Naive thymus-derived CD4-positive, alpha-beta T cell (primary cell): ENCODE measurements at regions of chr6 and their contacts with region 1.

Region 1: GRCh38 chr6:111259089-111259831 is 172.0 kb downstream of the SLC16A10 start:
- DNase-seq: peak; percentile 98 to 99 (median 99)
- ATAC-seq: peak; percentile 99
- H3K4me3 ChIP-seq: peak overlapping the region; percentile 89
- H3K4me3 Mint-ChIP-seq: peak overlapping the region; percentile 75 to 90 (median 86)
- H3K27ac ChIP-seq: peak overlapping the region; percentile 87
- H3K27ac Mint-ChIP-seq: peak overlapping the region; percentile 83 to 97 (median 92)
- H3K4me1 ChIP-seq: peaks cover 6 to 17% of the 10 kb centered on the region in 2 donors
- H3K4me1 Mint-ChIP-seq: peaks cover 12 to 37% (median 30%) of the 10 kb centered on the region in 7 donors
- H3K27me3 ChIP-seq: no peaks in the 10 kb centered on the region
- H3K27me3 Mint-ChIP-seq: peaks cover 0 to 18% (median 0%) of the 10 kb centered on the region in 5 donors

Region 2: DNA sequence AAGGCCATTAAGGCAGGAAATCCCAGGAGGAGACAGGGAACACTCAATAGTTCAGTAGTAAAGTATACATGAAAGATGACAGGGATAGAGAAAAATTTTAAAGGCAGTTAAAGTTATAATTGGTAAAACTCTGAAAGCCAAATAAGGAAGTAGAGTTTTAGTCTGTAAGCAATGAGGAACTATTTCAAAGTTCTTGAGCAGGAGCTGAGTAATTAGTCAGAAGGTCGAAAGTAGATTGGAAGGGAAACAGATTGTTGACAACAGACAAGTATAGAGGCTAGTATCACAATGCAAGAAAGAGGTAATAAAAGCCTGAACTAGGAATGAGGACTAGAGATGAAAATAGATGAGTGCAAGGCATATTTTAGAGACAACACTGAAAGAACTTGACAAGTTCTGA is 594.3 kb before region 1 on chr6:
- CTCF ChIA-PET with region 1: no interaction called
- POLR2A ChIA-PET with region 1: no interaction called
- intact Hi-C with region 1: no loop called
- DNase-seq: no peak
- ATAC-seq: peak; percentile 77
- H3K4me3 ChIP-seq: no peak overlapping the region
- H3K4me3 Mint-ChIP-seq: no peak overlapping the region
- H3K27ac ChIP-seq: no peak overlapping the region
- H3K27ac Mint-ChIP-seq: no peak overlapping the region
- H3K4me1 ChIP-seq: no peaks in the 10 kb centered on the region
- H3K4me1 Mint-ChIP-seq: peaks cover 0 to 8% (median 0%) of the 10 kb centered on the region in 7 donors
- H3K27me3 ChIP-seq: no peaks in the 10 kb centered on the region
- H3K27me3 Mint-ChIP-seq: no peaks in the 10 kb centered on the region

Region 3: GRCh38 chr6:110873981-110874879 is 385.0 kb before region 1 on chr6 and contains the start of gene AMD1:
- CTCF ChIA-PET with region 1: no interaction called
- POLR2A ChIA-PET with region 1: interaction called, 5 read pairs
- intact Hi-C with region 1: loop called (anchors 2 to 10 kb)
- DNase-seq: peak; percentile 87 to 97 (median 96)
- ATAC-seq: peak; percentile 85
- H3K4me3 ChIP-seq: peak within 1 kb of the TSS; percentile 99
- H3K4me3 Mint-ChIP-seq: peak within 1 kb of the TSS in 9 of 10 donors; percentile 94 to 99 (median 99)
- H3K27ac ChIP-seq: peak within 1 kb of the TSS; percentile 73
- H3K27ac Mint-ChIP-seq: peak within 1 kb of the TSS in 8 of 9 donors; percentile 96 to 100 (median 99)
- H3K4me1 ChIP-seq: peaks cover 26 to 28% of the 10 kb centered on the region in 2 donors
- H3K4me1 Mint-ChIP-seq: peaks cover 19 to 28% (median 27%) of the 10 kb centered on the region in 7 donors
- H3K27me3 ChIP-seq: no peaks in the 10 kb centered on the region
- H3K27me3 Mint-ChIP-seq: no peaks in the 10 kb centered on the region
- total RNA-seq, gene AMD1: 61.1 to 105 (median 73.8) TPM

Region 4: GRCh38 chr6:111087106-111087835 is 172.0 kb before region 1 on chr6 and contains the start of gene SLC16A10:
- CTCF ChIA-PET with region 1: no interaction called
- POLR2A ChIA-PET with region 1: no interaction called
- intact Hi-C with region 1: loop called (anchors 1 to 5 kb)
- DNase-seq: peak; percentile 75 to 92 (median 90)
- ATAC-seq: peak; percentile 95
- H3K4me3 ChIP-seq: peak within 1 kb of the TSS; percentile 83
- H3K4me3 Mint-ChIP-seq: peak within 1 kb of the TSS; percentile 85 to 100 (median 97)
- H3K27ac ChIP-seq: peak within 1 kb of the TSS; percentile 80
- H3K27ac Mint-ChIP-seq: peak within 1 kb of the TSS; percentile 54 to 99 (median 96)
- H3K4me1 ChIP-seq: peaks cover 10 to 17% of the 10 kb centered on the region in 2 donors
- H3K4me1 Mint-ChIP-seq: peaks cover 20 to 54% (median 48%) of the 10 kb centered on the region in 7 donors
- H3K27me3 ChIP-seq: no peaks in the 10 kb centered on the region
- H3K27me3 Mint-ChIP-seq: peaks cover 0 to 24% (median 0%) of the 10 kb centered on the region in 5 donors
- total RNA-seq, gene SLC16A10: 1.6 to 27.7 (median 16.7) TPM

Region 5: GRCh38 chr6:111565326-111566221 is 306.3 kb after region 1 on chr6:
- CTCF ChIA-PET with region 1: no interaction called
- POLR2A ChIA-PET with region 1: no interaction called
- intact Hi-C with region 1: loop called (anchors 1 to 2 kb)
- DNase-seq: peak in 2 of 9 donors; percentile 16 to 21
- ATAC-seq: peak; percentile 60
- H3K4me3 ChIP-seq: no peak overlapping the region
- H3K4me3 Mint-ChIP-seq: peak overlapping the region in 3 of 10 donors; percentile 3 to 15 (median 3)
- H3K27ac ChIP-seq: no peak overlapping the region
- H3K27ac Mint-ChIP-seq: peak overlapping the region; percentile 44 to 95 (median 85)
- H3K4me1 ChIP-seq: peaks cover 0 to 19% of the 10 kb centered on the region in 2 donors
- H3K4me1 Mint-ChIP-seq: peaks cover 19 to 61% (median 50%) of the 10 kb centered on the region in 7 donors
- H3K27me3 ChIP-seq: no peaks in the 10 kb centered on the region
- H3K27me3 Mint-ChIP-seq: no peaks in the 10 kb centered on the region

Region 6: GRCh38 chr6:111692327-111693164 is 433.3 kb after region 1 on chr6:
- CTCF ChIA-PET with region 1: interaction called, 3 read pairs
- POLR2A ChIA-PET with region 1: no interaction called
- intact Hi-C with region 1: loop called (anchors 10 kb)
- DNase-seq: peak in 1 of 9 donors; percentile 12
- ATAC-seq: peak; percentile 31
- H3K4me3 ChIP-seq: no peak overlapping the region
- H3K4me3 Mint-ChIP-seq: peak overlapping the region in 8 of 10 donors; percentile 21 to 60 (median 45)
- H3K27ac ChIP-seq: peak overlapping the region; percentile 31
- H3K27ac Mint-ChIP-seq: peak overlapping the region; percentile 48 to 89 (median 78)
- H3K4me1 ChIP-seq: peaks cover 21 to 22% of the 10 kb centered on the region in 2 donors
- H3K4me1 Mint-ChIP-seq: peaks cover 24 to 79% (median 59%) of the 10 kb centered on the region in 7 donors
- H3K27me3 ChIP-seq: no peaks in the 10 kb centered on the region
- H3K27me3 Mint-ChIP-seq: no peaks in the 10 kb centered on the region

Region 7: DNA sequence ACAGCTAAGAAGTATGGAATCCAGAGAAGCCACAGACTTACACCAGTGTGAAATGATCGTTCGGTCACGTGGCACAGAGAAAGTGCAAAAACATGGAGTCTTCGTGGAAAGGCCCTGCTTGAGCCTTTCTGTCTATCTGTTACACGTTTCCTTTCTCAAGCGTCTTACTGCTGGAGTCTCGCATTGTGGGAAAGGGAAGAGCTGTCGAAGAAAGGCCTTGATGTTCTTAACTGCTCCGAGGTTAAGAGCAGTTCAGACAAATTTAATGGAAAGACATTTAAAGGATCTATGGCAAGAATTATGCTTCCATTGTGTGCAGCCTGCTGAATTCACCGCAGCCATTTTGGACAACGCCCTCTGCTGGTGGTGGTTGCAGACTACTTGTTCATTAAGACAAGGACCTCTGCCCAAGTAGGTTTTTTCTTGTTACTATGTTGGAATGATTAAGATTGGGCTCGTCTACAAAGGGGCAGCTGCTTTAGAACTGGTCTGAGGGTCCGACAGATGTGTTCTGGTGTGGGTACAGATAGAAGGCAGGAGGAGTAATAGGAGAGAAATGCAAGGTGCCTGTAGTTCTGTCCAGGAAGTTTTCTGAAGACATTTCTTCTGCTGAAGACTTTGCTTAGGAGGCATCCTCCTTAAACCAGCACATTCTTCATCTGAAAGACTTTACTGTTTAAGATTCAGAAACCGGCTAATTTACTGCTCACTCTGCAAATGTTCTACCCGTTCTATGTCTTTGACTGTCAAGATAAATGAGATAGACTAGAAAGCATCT is 770.0 kb after region 1 on chr6:
- CTCF ChIA-PET with region 1: no interaction called
- POLR2A ChIA-PET with region 1: no interaction called
- intact Hi-C with region 1: loop called in 1 of 2 experiments (anchors 5 kb)
- DNase-seq: peak in 7 of 9 donors; percentile 22 to 58 (median 43)
- ATAC-seq: no peak
- H3K4me3 ChIP-seq: no peak overlapping the region
- H3K4me3 Mint-ChIP-seq: peak overlapping the region; percentile 49 to 83 (median 68)
- H3K27ac ChIP-seq: peak overlapping the region; percentile 90
- H3K27ac Mint-ChIP-seq: peak overlapping the region; percentile 95 to 100 (median 98)
- H3K4me1 ChIP-seq: peaks cover 34 to 74% of the 10 kb centered on the region in 2 donors
- H3K4me1 Mint-ChIP-seq: peaks cover 46 to 94% (median 84%) of the 10 kb centered on the region in 7 donors
- H3K27me3 ChIP-seq: no peaks in the 10 kb centered on the region
- H3K27me3 Mint-ChIP-seq: peaks cover 0 to 3% (median 0%) of the 10 kb centered on the region in 5 donors